OCI-LY7 (cell line): ENCODE measurements at regions of chr13 and their contacts with region 1.

Region 1: DNA sequence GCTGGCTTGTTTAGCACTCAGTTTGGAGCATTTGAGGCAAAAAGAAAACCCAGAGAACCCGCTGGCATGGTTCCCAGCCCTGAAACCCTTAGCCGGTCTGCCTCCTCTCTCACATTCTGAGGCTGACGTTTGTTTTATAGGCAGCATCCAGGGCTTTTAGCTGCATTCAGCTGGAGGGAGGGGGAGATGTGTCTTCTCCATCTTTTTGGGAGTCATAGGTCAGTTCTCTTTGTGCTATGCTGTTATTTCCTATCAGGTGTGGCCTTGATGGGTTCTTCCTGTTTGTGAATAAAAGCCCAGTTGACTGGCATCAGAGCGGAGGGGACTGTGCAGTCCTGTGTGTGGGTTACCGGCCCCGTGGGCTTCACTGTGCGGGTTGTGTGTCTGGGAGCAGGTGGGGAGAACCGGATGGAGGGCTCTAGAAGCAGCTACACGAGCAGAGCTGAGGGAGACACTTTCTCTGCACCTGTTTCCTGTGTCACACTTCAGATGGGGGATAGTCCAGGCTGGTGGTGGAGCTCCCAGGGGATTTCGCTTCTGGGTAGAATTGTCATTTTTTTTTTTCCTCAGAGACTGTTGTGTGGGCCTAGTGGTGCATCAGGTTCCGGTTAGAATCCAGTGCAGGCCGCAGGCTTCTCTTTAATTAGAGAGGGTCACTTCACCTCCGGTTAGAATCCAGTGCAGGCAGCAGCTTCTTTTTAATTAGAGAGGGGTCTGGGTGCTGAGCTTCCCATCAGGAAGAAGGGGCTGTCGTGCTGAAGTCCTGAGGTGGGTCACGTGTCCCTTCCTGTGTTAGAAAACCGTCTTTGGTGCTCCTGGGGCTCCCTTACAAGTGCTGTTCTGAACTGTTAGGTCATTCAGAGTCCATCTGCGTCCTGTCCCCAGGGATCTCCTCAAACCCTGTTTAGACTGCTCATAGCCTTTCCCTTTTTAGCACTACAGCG is 69.6 kb downstream of the ARHGEF7 start:
- DNase-seq: peak; percentile 95
- H3K4me3 ChIP-seq: peak overlapping the region; percentile 69
- H3K27ac ChIP-seq: peak overlapping the region; percentile 100
- H3K4me1 ChIP-seq: peaks cover 68% of the 10 kb centered on the region
- CTCF ChIP-seq: no peak

Region 2: GRCh38 chr13:110915057-110915873 is 269.5 kb before region 1 on chr13 and contains the start of gene ANKRD10:
- CTCF ChIA-PET with region 1: no interaction called
- POLR2A ChIA-PET with region 1: interaction called, 3 read pairs
- intact Hi-C with region 1: loop called (anchors 10 kb)
- DNase-seq: peak; percentile 89
- H3K4me3 ChIP-seq: peak within 1 kb of the TSS; percentile 98
- H3K27ac ChIP-seq: peak within 1 kb of the TSS; percentile 90
- H3K4me1 ChIP-seq: peaks cover 18% of the 10 kb centered on the region
- CTCF ChIP-seq: peak; percentile 66
- total RNA-seq, gene ANKRD10: 53.2 and 82.8 TPM in 2 replicates

Region 3: DNA sequence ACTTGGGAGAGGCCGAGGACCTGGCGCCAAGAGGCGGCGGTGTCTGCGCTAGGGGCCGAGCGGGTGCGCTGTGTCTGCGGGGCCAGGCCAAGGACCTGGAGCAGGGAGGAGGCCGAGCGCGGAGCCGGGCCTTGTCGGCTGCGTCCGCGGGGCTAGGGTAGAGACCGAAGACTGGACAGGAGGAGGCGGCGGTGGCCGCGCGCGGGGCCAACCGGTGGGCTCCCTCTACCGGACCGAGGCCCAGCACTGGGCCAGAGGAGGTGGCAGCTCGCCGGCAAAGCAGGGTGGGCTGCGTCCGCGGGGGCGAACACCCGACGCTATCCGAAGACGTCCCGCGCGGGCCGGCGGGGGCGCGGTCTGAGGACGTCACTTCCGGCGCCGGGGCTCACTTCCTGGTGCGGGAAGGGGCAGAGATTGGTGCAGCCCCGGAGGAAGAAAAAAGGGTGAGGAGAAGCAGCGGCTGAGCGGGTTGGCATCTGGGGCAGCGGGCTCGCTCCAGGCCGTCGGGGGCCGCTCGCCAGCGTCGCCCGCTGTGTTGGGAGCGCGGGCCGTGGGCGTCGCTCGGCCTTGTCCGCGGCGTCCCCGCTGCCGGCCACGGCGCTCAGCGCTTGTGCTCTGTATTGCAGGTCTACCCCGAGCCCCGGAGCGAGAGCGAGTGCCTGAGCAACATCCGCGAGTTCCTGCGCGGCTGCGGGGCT is 31.3 kb before region 1 on chr13:
- CTCF ChIA-PET with region 1: interaction called, 3 read pairs
- POLR2A ChIA-PET with region 1: interaction called, 8 read pairs
- intact Hi-C with region 1: loop called (anchors 2 kb)
- DNase-seq: peak; percentile 81
- H3K4me3 ChIP-seq: peak overlapping the region; percentile 83
- H3K27ac ChIP-seq: peak overlapping the region; percentile 69
- H3K4me1 ChIP-seq: peaks cover 17% of the 10 kb centered on the region
- CTCF ChIP-seq: no peak

Region 4: GRCh38 chr13:111161601-111162600 is 22.8 kb before region 1 on chr13:
- CTCF ChIA-PET with region 1: interaction called, 3 read pairs
- POLR2A ChIA-PET with region 1: interaction called, 8 read pairs
- intact Hi-C with region 1: loop called (anchors 2 kb)
- DNase-seq: peak; percentile 34
- H3K4me3 ChIP-seq: peak overlapping the region; percentile 43
- H3K27ac ChIP-seq: peak overlapping the region; percentile 65
- H3K4me1 ChIP-seq: peaks cover 47% of the 10 kb centered on the region
- CTCF ChIP-seq: no peak

Region 5: GRCh38 chr13:111202745-111203144 is 18.0 kb after region 1 on chr13:
- CTCF ChIA-PET with region 1: no interaction called
- POLR2A ChIA-PET with region 1: interaction called, 14 read pairs
- intact Hi-C with region 1: loop called (anchors 1 kb)
- DNase-seq: peak; percentile 66
- H3K4me3 ChIP-seq: peak overlapping the region; percentile 62
- H3K27ac ChIP-seq: peak overlapping the region; percentile 93
- H3K4me1 ChIP-seq: peaks cover 85% of the 10 kb centered on the region
- CTCF ChIP-seq: no peak